Mammary epithelial cell (primary cell): ENCODE measurements at regions of chr11 and their contacts with region 1.

Region 1: GRCh38 chr11:6298605-6299004 is 21.7 kb downstream of the CAVIN3 start:
- DNase-seq: peak; percentile 28
- H3K4me3 ChIP-seq: no peak overlapping the region
- H3K27ac ChIP-seq: no peak overlapping the region
- H3K4me1 ChIP-seq: no peaks in the 10 kb centered on the region
- H3K27me3 ChIP-seq: no peaks in the 10 kb centered on the region
- CTCF ChIP-seq: peak; percentile 59 to 97

Region 2: GRCh38 chr11:6022956-6023355 is 275.6 kb before region 1 on chr11:
- CTCF ChIA-PET with region 1: no interaction called
- dilution Hi-C with region 1: no loop called
- in situ Hi-C with region 1: no loop called
- intact Hi-C with region 1: loop called (anchors 1 kb)
- DNase-seq: peak; percentile 40
- H3K4me3 ChIP-seq: no peak overlapping the region
- H3K27ac ChIP-seq: no peak overlapping the region
- H3K4me1 ChIP-seq: no peaks in the 10 kb centered on the region
- H3K27me3 ChIP-seq: no peaks in the 10 kb centered on the region
- CTCF ChIP-seq: peak; percentile 50 to 73

Region 3: GRCh38 chr11:6251120-6251733 is 47.4 kb before region 1 on chr11:
- CTCF ChIA-PET with region 1: interaction called, 6 read pairs
- dilution Hi-C with region 1: loop called (anchors 10 kb)
- in situ Hi-C with region 1: no loop called
- intact Hi-C with region 1: loop called (anchors 5 kb)
- DNase-seq: peak; percentile 56
- H3K4me3 ChIP-seq: no peak overlapping the region
- H3K27ac ChIP-seq: no peak overlapping the region
- H3K4me1 ChIP-seq: no peaks in the 10 kb centered on the region
- H3K27me3 ChIP-seq: no peaks in the 10 kb centered on the region
- CTCF ChIP-seq: peak; percentile 92 to 94

Region 4: GRCh38 chr11:6283453-6284023 is 15.1 kb before region 1 on chr11:
- CTCF ChIA-PET with region 1: interaction called, 3 read pairs
- dilution Hi-C with region 1: no loop called
- in situ Hi-C with region 1: no loop called
- intact Hi-C with region 1: loop called (anchors 2 kb)
- DNase-seq: no peak
- H3K4me3 ChIP-seq: no peak overlapping the region
- H3K27ac ChIP-seq: no peak overlapping the region
- H3K4me1 ChIP-seq: peaks cover 10% of the 10 kb centered on the region
- H3K27me3 ChIP-seq: no peaks in the 10 kb centered on the region
- CTCF ChIP-seq: no peak

Region 5: DNA sequence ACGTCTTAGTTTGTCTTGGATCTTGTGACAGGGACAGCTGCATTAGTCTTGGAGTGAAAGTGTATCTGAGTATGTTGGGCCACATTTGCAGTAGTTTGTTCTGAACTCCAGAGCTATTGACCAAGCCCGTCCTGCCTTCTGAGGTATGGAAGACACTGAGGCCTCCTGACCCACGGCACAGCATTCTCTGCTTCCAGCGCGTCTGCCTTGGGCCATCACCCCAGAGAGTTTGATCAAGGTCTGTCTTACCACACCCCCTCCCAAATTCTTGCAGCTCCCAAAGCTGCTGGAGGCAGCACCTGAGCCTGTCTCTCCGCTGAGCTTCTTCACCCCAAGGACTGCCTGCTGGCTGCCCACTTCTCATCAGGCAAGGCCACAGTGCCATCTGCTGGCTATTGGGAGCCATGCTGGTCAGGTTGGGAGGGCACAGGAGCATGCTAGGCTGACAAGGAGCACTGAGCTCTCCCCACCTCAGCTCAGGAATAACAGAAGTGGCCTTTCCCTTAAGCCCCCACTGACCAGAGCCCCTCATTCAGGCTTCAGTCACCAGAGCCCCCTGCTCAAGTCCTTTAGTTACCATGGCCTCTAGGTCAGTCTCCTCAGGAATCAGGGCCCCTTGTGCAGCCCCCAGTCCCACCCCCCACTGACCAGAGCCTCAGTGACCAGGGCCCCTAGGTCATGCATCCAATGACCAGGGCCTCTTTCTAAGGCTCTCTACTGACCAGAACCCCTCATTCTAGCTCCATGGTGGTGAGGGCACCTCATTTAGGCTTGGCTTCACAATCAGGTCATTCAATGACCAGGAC is 64.5 kb after region 1 on chr11:
- CTCF ChIA-PET with region 1: interaction called, 4 read pairs
- dilution Hi-C with region 1: no loop called
- in situ Hi-C with region 1: no loop called
- intact Hi-C with region 1: loop called (anchors 2 kb)
- DNase-seq: peak; percentile 68
- H3K4me3 ChIP-seq: no peak overlapping the region
- H3K27ac ChIP-seq: no peak overlapping the region
- H3K4me1 ChIP-seq: no peaks in the 10 kb centered on the region
- H3K27me3 ChIP-seq: no peaks in the 10 kb centered on the region
- CTCF ChIP-seq: peak; percentile 98 to 99

Region 6: DNA sequence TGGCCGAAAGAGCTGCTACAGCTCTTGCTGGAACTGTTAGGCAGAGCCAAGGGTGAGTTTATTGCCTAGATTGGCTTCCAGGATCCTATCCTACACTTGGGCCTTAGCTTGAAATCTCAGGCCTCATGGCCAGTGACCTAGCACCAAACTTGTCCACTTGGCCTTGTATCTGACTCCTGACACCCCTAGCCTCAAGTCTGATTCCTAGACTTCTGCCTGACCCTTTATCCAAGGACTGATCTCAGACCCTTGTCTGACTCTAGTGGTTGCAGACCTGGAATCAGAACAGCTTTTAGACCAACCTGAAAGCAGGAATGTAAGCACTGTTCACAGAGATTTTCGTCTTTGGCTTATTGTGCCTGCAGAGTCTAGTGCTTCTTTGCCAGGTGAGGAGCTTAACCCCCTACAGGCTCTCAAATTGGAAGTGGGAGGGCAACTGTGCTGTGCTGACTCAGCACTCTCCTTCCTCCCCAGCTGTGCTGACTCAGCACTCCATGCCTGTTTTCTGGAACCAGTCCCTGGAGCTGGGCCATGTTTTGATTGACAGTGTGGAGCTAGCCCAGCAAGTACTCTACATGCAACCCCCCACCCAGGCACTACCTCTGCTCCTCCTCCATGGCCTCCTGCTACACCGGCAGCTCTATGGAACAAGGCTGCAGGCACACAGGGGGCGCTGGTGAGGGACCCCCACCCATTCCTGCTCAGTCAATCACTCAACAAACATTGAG is 269.8 kb after region 1 on chr11:
- CTCF ChIA-PET with region 1: no interaction called
- dilution Hi-C with region 1: no loop called
- in situ Hi-C with region 1: no loop called
- intact Hi-C with region 1: no loop called
- DNase-seq: peak; percentile 24
- H3K4me3 ChIP-seq: no peak overlapping the region
- H3K27ac ChIP-seq: no peak overlapping the region
- H3K4me1 ChIP-seq: peaks cover 4% of the 10 kb centered on the region
- H3K27me3 ChIP-seq: no peaks in the 10 kb centered on the region
- CTCF ChIP-seq: no peak